ENCODE measurements at regions of chr12 and their contacts with region 1.

Region 1: DNA sequence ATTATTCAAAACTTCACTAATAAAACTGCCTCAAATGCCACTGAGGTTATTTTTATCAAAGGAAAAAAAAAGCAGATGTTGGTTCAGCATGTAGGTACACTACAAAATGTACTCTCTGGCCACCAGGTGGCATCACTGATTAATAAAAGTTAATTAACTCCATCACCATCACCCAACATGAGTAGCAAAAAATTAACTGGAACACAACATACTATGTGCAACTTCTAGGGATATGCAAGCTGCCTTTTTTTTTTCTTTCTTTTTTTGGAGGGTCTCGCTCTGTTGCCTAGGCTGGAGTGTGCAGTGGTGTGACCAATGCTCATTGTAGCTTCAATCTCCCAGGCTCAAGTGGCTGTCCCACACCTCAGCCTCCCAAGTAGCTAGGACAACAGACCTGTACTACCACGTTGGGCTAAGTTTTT is 43.8 kb upstream of the NR2C1 start:
- DNase-seq: peak; percentile 63 to 72 (median 66)
- H3K4me3 ChIP-seq: no peak overlapping the region
- H3K4me3 Mint-ChIP-seq: no peak overlapping the region
- H3K27ac ChIP-seq: no peak overlapping the region
- H3K27ac Mint-ChIP-seq: no peak overlapping the region
- H3K4me1 ChIP-seq: no peaks in the 10 kb centered on the region
- H3K4me1 Mint-ChIP-seq: no peaks in the 10 kb centered on the region
- H3K27me3 ChIP-seq: no peaks in the 10 kb centered on the region
- H3K27me3 Mint-ChIP-seq: no peaks in the 10 kb centered on the region

Region 2: GRCh38 chr12:95169368-95169767 is 52.2 kb after region 1 on chr12:
- CTCF ChIA-PET with region 1: no interaction called
- POLR2A ChIA-PET with region 1: no interaction called
- intact Hi-C with region 1: no loop called
- DNase-seq: no peak
- H3K4me3 ChIP-seq: no peak overlapping the region
- H3K4me3 Mint-ChIP-seq: no peak overlapping the region
- H3K27ac ChIP-seq: no peak overlapping the region
- H3K27ac Mint-ChIP-seq: no peak overlapping the region
- H3K4me1 ChIP-seq: no peaks in the 10 kb centered on the region
- H3K4me1 Mint-ChIP-seq: no peaks in the 10 kb centered on the region
- H3K27me3 ChIP-seq: no peaks in the 10 kb centered on the region
- H3K27me3 Mint-ChIP-seq: peaks cover 1 to 5% of the 10 kb centered on the region in 2 donors

Region 3: DNA sequence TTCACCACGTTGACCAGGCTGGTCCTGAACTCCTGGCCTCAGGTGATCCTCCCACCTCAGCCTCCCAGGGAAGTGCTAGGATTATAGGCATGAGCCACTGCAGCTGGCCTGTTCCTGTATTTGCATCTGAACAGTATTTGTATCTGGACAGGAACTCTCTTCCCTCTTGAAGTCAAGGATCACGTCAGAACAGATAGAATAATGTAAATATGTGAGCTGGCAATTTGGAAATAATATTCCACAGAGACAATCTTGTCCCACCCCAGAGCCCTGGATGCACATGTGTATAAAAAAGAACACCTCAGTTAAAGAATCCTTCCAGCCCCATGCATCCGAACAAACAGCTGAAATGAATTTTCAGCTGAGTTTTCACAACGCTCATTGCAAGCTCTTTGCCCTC is 218.8 kb after region 1 on chr12:
- CTCF ChIA-PET with region 1: interaction called, 6 read pairs
- POLR2A ChIA-PET with region 1: no interaction called
- intact Hi-C with region 1: loop called (anchors 2 kb)
- DNase-seq: no peak
- H3K4me3 ChIP-seq: no peak overlapping the region
- H3K4me3 Mint-ChIP-seq: no peak overlapping the region
- H3K27ac ChIP-seq: no peak overlapping the region
- H3K27ac Mint-ChIP-seq: peak overlapping the region in 1 of 7 donors; percentile 70
- H3K4me1 ChIP-seq: no peaks in the 10 kb centered on the region
- H3K4me1 Mint-ChIP-seq: peaks cover 0 to 4% (median 2%) of the 10 kb centered on the region in 4 donors
- H3K27me3 ChIP-seq: no peaks in the 10 kb centered on the region
- H3K27me3 Mint-ChIP-seq: peaks cover 0 to 2% of the 10 kb centered on the region in 2 donors

Measured in CD4-positive, alpha-beta memory T cell (primary cell).